Activated T-helper 2 cell treated with anti-CD3 and anti-CD28 coated beads, Interferon-gamma antibody, Interleukin-2, Interleukin-4, amounts not matched to agents 10 μg/mL and 5 μg/mL and 100 μg/mL, durations not matched to agents 14 hours and 24 hours and 36 hours (primary cell): ENCODE measurements at regions of chr18 and their contacts with region 1.

Region 1: GRCh38 chr18:24488824-24489493 is 28.5 kb downstream of the HRH4 start:
- DNase-seq: no peak
- H3K4me3 Mint-ChIP-seq: no peak overlapping the region
- H3K27ac Mint-ChIP-seq: no peak overlapping the region
- H3K4me1 Mint-ChIP-seq: peaks cover 15% of the 10 kb centered on the region
- H3K27me3 Mint-ChIP-seq: peaks cover 55% of the 10 kb centered on the region

Region 2: GRCh38 chr18:24176727-24177416 is 312.1 kb before region 1 on chr18:
- intact Hi-C with region 1: loop called (anchors 1 kb)
- DNase-seq: peak; percentile 26
- H3K4me3 Mint-ChIP-seq: no peak overlapping the region
- H3K27ac Mint-ChIP-seq: no peak overlapping the region
- H3K4me1 Mint-ChIP-seq: peaks cover 7% of the 10 kb centered on the region
- H3K27me3 Mint-ChIP-seq: peaks cover 7% of the 10 kb centered on the region

Region 3: DNA sequence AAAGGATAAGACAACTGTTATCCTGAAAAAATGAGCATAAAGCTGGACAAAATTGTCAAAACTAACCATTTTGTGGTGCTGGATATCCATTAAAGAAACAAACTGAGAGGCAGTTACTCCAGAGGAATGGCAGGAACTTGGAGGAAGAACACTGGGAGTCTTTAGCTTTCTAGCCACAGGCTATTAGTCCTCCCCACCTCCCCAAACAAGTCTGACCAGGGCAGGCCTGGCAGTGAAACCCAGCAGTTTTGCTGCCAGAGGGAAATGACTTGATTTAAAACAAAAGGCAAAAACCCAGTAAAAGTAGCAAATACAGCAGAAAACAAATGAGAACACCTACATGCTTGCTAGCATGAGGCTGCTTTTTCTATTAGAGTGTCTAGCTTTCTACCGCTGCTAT is 126.2 kb before region 1 on chr18:
- intact Hi-C with region 1: loop called (anchors 1 kb)
- DNase-seq: no peak
- H3K4me3 Mint-ChIP-seq: no peak overlapping the region
- H3K27ac Mint-ChIP-seq: no peak overlapping the region
- H3K4me1 Mint-ChIP-seq: no peaks in the 10 kb centered on the region
- H3K27me3 Mint-ChIP-seq: peaks cover 18% of the 10 kb centered on the region

Region 4: GRCh38 chr18:24446953-24447538 is 41.9 kb before region 1 on chr18:
- intact Hi-C with region 1: loop called (anchors 5 kb)
- DNase-seq: no peak
- H3K4me3 Mint-ChIP-seq: no peak overlapping the region
- H3K27ac Mint-ChIP-seq: no peak overlapping the region
- H3K4me1 Mint-ChIP-seq: peaks cover 8% of the 10 kb centered on the region
- H3K27me3 Mint-ChIP-seq: peaks cover 5% of the 10 kb centered on the region

Region 5: DNA sequence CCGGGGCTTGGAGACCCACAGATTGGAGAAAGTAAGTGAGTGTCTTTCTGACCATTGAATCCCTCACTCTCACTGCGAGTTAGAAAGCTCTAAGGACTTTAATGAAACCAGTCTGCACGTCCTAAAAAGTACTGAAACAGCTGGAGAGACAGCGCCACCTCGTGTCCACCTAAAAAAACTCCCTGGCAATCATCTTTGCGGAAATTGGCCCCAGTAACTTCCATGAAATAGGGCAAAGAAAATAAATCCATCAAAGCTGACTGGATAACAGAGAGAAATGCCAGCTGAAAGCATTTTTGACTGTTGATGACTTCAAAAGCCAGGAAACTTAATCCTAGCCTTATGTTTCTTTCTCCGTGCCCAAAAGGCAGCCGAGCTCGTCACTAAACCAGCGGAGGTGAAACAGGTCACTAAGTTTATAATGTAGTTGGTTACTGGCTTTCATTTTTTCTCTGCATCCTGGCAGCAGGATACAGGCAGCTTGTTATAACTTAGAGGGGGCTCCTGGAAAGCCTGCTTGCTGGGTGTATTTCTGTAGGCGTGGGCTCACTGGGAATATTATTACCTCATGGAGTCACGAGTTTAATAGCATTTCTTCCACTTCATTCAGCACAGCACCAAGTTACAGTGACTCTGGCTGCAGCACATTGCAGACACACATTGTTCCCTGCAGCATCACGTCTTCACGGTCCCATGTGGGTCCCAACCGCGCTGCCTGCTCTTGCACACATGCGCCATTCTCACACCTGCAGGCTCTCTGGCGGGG is 238.0 kb after region 1 on chr18:
- intact Hi-C with region 1: loop called (anchors 2 kb)
- DNase-seq: peak; percentile 29
- H3K4me3 Mint-ChIP-seq: no peak overlapping the region
- H3K27ac Mint-ChIP-seq: no peak overlapping the region
- H3K4me1 Mint-ChIP-seq: no peaks in the 10 kb centered on the region
- H3K27me3 Mint-ChIP-seq: peaks cover 10% of the 10 kb centered on the region